Activated naive CD8-positive, alpha-beta T cell treated with anti-CD3 and anti-CD28 coated beads, Interleukin-2, amount 10 ng/mL, durations not matched to agents 7 days and 5 days (primary cell): ENCODE measurements at regions of chr19 and their contacts with region 1.

Region 1: DNA sequence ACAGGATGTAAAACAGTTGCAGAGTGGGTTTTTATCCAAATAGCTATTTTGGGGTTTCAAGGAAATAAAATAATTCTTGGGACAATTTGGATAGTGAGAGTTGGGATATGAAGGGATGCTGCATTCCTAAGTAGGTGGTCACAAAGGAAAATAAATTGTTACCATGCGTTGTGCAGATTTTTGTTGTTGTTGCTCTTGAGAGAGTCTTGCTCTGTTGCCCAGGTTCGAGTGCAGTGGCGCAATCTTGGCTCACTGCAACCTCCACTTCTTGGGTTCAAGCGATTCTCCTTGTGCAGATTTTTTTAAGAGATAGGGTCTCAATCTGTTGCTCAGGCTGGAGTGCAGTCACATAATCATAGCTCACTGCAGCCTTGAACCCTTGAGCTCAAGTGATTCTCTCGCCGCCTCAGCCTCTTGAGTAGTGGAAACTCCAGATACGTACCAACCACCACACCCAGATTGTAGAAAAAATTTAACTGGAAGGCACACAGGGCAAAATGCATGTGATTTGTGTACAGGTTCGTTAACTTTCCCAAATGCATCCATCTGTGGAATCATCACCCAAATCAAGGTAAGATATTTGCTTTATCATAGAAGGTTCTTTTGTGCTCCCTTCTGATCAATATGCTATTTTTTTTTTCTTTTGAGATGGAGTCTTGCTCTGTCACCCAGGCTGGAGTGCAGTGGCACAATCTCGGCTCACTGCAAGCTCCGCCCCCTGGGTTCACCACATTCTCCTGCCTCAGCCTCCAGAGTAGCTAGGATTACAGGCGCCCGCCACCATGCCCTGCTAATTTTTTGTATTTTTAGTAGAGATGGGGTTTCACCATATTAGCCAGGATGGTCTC is 16.0 kb downstream of the SLC1A5 start:
- DNase-seq: no peak
- ATAC-seq: no peak
- H3K4me3 Mint-ChIP-seq: no peak overlapping the region
- H3K27ac Mint-ChIP-seq: no peak overlapping the region
- H3K4me1 Mint-ChIP-seq: peaks cover 2% of the 10 kb centered on the region
- H3K27me3 Mint-ChIP-seq: no peaks in the 10 kb centered on the region

Region 2: GRCh38 chr19:46840136-46840942 is 67.9 kb after region 1 on chr19:
- POLR2A ChIA-PET with region 1: interaction called, 12 read pairs
- DNase-seq: peak; percentile 60
- ATAC-seq: peak; percentile 74
- H3K4me3 Mint-ChIP-seq: no peak overlapping the region
- H3K27ac Mint-ChIP-seq: no peak overlapping the region
- H3K4me1 Mint-ChIP-seq: peaks cover 5% of the 10 kb centered on the region
- H3K27me3 Mint-ChIP-seq: no peaks in the 10 kb centered on the region